BJ (cell line): ENCODE measurements at regions of chr1 and their contacts with region 1.

Region 1: GRCh38 chr1:45490626-45491486 is at the start of gene TESK2:
- DNase-seq: peak; percentile 98
- H3K4me3 ChIP-seq: peak within 1 kb of the TSS; percentile 74
- H3K27me3 ChIP-seq: no peaks in the 10 kb centered on the region
- CTCF ChIP-seq: peak; percentile 9; the same call in 1 of the 2 replicates
- polyA plus RNA-seq, gene TESK2: 2.4 and 2.5 TPM in 2 replicates

Region 2: GRCh38 chr1:45011837-45012638 is 478.8 kb before region 1 on chr1 and contains the start of gene UROD:
- CTCF ChIA-PET with region 1: interaction called, 80 read pairs
- POLR2A ChIA-PET with region 1: no interaction called
- DNase-seq: peak; percentile 71
- H3K4me3 ChIP-seq: peak within 1 kb of the TSS; percentile 86
- H3K27me3 ChIP-seq: no peaks in the 10 kb centered on the region
- CTCF ChIP-seq: no peak
- polyA plus RNA-seq, gene UROD: 219 and 303 TPM in 2 replicates

Region 3: GRCh38 chr1:45258059-45258650 is 232.7 kb before region 1 on chr1:
- CTCF ChIA-PET with region 1: no interaction called
- POLR2A ChIA-PET with region 1: interaction called, 10 read pairs
- DNase-seq: no peak
- H3K4me3 ChIP-seq: no peak overlapping the region
- H3K27me3 ChIP-seq: no peaks in the 10 kb centered on the region
- CTCF ChIP-seq: no peak

Region 4: DNA sequence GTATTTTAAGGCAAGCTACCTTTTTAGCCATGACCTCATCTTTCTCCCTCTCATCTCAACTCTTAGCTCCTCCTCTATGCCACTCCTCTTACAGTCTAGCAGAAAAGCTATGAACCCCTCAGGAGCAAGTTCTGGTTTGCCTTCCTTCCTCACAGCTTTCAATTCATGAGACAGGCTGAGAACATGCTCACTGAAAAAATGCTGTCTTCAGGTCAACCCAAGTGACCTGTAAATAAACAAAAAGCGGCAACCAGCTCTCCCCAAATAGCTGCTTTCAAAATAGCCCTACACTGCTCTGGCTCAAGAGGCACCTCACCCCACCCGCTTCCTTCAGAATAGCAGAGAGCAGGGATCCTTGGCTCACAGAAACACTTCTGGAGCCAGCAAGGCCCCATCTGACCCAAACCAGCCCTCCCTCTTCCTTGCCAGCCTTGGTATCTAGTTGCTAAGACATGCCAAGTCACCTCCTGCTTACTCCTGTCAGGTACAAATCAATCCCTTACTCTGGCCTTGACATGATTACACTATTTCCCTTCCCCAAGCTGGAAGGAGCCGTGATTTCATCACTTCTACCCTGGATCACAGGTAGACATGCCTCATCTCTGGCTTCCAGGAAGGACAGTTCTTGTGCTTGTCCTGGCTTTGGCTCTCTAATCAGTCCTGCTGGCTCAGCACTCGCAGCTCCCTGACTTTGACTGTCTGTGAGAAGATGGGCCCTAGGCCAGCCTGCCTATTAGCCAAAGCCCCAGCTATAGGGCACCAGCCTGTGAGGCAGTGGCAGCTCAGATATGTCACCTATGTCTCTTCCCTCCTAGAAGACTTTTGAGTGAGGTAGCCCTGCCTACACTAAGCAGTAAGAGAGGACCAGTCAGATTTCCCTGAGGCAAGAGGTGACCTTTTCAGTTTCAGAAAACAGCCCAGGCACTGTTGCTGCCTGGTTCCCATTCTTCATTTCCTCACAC is 141.9 kb before region 1 on chr1:
- CTCF ChIA-PET with region 1: interaction called, 18 read pairs
- POLR2A ChIA-PET with region 1: no interaction called
- DNase-seq: no peak
- H3K4me3 ChIP-seq: no peak overlapping the region
- H3K27me3 ChIP-seq: no peaks in the 10 kb centered on the region
- CTCF ChIP-seq: no peak

Region 5: GRCh38 chr1:45512641-45513054 is 21.8 kb after region 1 on chr1:
- CTCF ChIA-PET with region 1: interaction called, 10 read pairs
- POLR2A ChIA-PET with region 1: no interaction called
- DNase-seq: no peak
- H3K4me3 ChIP-seq: no peak overlapping the region
- H3K27me3 ChIP-seq: no peaks in the 10 kb centered on the region
- CTCF ChIP-seq: peak; percentile 75

Region 6: GRCh38 chr1:45583264-45583665 is 92.4 kb after region 1 on chr1:
- CTCF ChIA-PET with region 1: no interaction called
- POLR2A ChIA-PET with region 1: no interaction called
- DNase-seq: peak; percentile 91
- H3K4me3 ChIP-seq: peak overlapping the region; percentile 100
- H3K27me3 ChIP-seq: no peaks in the 10 kb centered on the region
- CTCF ChIP-seq: no peak